ENCODE measurements at regions of chr1 and their contacts with region 1.

Region 1: DNA sequence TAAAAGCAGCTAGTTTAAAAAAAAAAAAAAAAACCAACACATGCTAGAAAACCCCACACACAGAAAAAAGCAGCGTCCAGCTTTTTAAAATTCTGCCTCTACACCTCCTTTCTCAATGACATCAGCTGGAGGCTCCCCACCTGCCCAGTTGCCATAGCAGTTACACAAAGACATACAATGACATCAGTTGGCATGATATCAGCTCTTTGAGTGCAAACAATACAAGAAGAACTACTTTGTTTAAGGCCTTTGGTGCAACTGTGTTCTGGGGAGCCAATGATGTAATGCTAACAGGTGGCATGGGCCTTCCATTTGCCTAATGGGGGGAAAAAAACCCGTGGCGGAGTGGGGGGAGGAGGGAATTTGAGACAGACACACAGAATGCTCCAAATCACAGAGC is 32.9 kb downstream of the DUSP10 start:
- DNase-seq: peak; percentile 50
- H3K4me3 Mint-ChIP-seq: no peak overlapping the region
- H3K27ac Mint-ChIP-seq: peak overlapping the region; percentile 92
- H3K4me1 Mint-ChIP-seq: peaks cover 78% of the 10 kb centered on the region
- H3K27me3 Mint-ChIP-seq: no peaks in the 10 kb centered on the region

Region 2: GRCh38 chr1:221517961-221518360 is 191.0 kb before region 1 on chr1:
- intact Hi-C with region 1: no loop called
- DNase-seq: no peak
- H3K4me3 Mint-ChIP-seq: no peak overlapping the region
- H3K27ac Mint-ChIP-seq: no peak overlapping the region
- H3K4me1 Mint-ChIP-seq: peaks cover 7% of the 10 kb centered on the region
- H3K27me3 Mint-ChIP-seq: no peaks in the 10 kb centered on the region

Region 3: GRCh38 chr1:221725735-221726672 is 17.0 kb after region 1 on chr1:
- intact Hi-C with region 1: loop called (anchors 1 kb)
- DNase-seq: no peak
- H3K4me3 Mint-ChIP-seq: peak overlapping the region; percentile 55
- H3K27ac Mint-ChIP-seq: peak overlapping the region; percentile 92
- H3K4me1 Mint-ChIP-seq: peaks cover 87% of the 10 kb centered on the region
- H3K27me3 Mint-ChIP-seq: no peaks in the 10 kb centered on the region

Region 4: DNA sequence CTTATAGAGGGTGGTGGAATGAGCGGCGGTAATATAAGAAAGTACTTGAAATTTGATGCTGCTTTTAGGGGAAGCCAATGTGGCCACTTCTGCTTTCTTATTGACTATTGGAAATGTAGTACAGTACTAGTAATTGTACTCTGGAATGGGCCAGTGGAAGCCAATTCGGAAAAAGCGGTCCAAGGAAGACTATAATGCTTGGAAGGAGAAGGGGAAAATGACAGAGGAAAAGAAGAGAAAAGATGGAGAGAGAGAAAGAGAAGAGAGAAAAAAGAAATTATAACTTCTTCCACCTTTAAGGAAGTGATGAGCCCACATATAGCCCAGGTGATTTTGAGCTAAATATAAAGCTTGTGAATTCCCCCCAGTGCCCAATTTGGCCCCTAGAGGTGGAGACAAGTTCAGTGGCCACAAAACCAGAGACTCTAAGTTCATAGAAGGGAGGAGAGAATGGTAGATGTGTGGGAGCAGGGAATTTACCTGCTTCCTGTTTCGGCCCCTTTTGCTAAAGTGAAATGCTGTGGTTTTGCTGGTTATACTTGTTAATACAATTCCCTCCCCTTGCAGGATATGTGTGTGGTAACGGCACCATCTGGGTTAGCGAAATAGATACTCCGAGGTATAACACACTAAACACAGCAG is 68.6 kb after region 1 on chr1:
- intact Hi-C with region 1: loop called (anchors 1 kb)
- DNase-seq: peak; percentile 55
- H3K4me3 Mint-ChIP-seq: peak overlapping the region; percentile 79
- H3K27ac Mint-ChIP-seq: peak overlapping the region; percentile 98
- H3K4me1 Mint-ChIP-seq: peaks cover 92% of the 10 kb centered on the region
- H3K27me3 Mint-ChIP-seq: no peaks in the 10 kb centered on the region

Region 5: DNA sequence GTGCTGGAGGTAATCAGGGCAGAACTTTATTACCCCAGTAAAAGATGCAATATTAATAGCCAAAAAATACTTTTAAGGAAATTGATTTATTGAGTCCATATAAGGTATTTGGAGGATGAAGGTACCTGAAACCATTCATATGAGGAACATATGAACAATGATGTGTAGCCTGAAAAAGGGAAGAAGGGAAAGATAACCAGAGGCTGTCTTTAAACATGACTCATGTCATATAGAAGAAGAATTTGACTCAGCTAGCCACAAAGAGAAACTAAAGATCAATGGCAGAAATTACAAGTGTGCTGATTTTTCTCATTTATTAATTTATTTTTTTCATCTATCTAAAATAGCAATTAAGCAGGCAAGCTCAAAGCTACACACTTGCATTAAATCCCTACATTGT is 169.1 kb after region 1 on chr1:
- intact Hi-C with region 1: loop called (anchors 1 kb)
- DNase-seq: no peak
- H3K4me3 Mint-ChIP-seq: no peak overlapping the region
- H3K27ac Mint-ChIP-seq: no peak overlapping the region
- H3K4me1 Mint-ChIP-seq: peaks cover 11% of the 10 kb centered on the region
- H3K27me3 Mint-ChIP-seq: peaks cover 5% of the 10 kb centered on the region

Region 6: GRCh38 chr1:221994274-221994698 is 285.3 kb after region 1 on chr1:
- intact Hi-C with region 1: loop called (anchors 2 kb)
- DNase-seq: no peak
- H3K4me3 Mint-ChIP-seq: no peak overlapping the region
- H3K27ac Mint-ChIP-seq: peak overlapping the region; percentile 77
- H3K4me1 Mint-ChIP-seq: peaks cover 40% of the 10 kb centered on the region
- H3K27me3 Mint-ChIP-seq: peaks cover 2% of the 10 kb centered on the region

Region 7: GRCh38 chr1:222021129-222021528 is 312.1 kb after region 1 on chr1:
- intact Hi-C with region 1: no loop called
- DNase-seq: no peak
- H3K4me3 Mint-ChIP-seq: no peak overlapping the region
- H3K27ac Mint-ChIP-seq: no peak overlapping the region
- H3K4me1 Mint-ChIP-seq: no peaks in the 10 kb centered on the region
- H3K27me3 Mint-ChIP-seq: peaks cover 6% of the 10 kb centered on the region

Region 8: DNA sequence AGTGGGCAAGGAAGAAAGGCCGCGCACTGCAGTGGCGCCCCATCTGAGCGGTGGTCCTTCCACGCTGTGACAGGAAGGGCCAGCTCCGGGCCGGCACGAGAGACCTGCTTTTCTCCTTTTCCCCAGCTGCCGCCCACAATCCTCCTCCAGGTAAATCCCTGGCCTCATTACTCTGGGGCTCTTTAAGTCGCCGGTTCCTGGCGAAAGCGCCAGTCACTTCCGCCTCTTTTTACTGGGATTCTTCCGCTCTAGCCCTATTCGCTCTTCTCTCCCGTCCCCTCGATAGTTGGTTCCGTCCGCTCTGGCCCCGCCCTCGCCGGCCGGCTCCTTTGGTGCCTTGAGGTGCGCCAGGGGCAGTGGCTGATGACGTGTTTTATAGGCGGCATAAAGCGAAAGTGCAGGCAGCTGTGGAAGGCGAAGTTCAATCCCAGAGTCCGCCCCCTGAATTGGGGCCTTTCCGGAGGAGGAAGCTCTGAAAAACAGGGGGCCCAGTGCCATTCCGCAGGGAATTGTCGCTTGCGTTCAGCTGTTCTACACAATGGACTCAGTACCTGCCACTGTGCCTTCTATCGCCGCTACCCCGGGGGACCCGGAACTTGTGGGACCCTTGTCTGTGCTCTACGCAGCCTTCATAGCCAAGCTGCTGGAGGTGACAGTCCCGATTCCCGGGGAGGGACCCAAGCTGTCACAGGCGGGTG is 935.1 kb after region 1 on chr1:
- intact Hi-C with region 1: loop called (anchors 10 kb)
- DNase-seq: peak; percentile 98
- H3K4me3 Mint-ChIP-seq: peak overlapping the region; percentile 99
- H3K27ac Mint-ChIP-seq: peak overlapping the region; percentile 97
- H3K4me1 Mint-ChIP-seq: peaks cover 33% of the 10 kb centered on the region
- H3K27me3 Mint-ChIP-seq: no peaks in the 10 kb centered on the region

Measured in activated T-helper 1 cell treated with anti-CD3 and anti-CD28 coated beads, Interleukin-12 subunit alpha, Interleukin-12 subunit beta, Interleukin-2, Interleukin-4 antibody, amounts not matched to agents 30 ng/mL and 10 ng/mL and 1 ng/mL, durations not matched to agents 14 hours and 24 hours and 36 hours (primary cell).